GM13976 (cell line): ENCODE measurements at regions of chr3 and their contacts with region 1.

Region 1: GRCh38 chr3:196609343-196609775 is 30.1 kb upstream of the NRROS start:
- DNase-seq: peak; percentile 88
- CTCF ChIP-seq: peak; percentile 69

Region 2: GRCh38 chr3:196684548-196685407 is 75.4 kb after region 1 on chr3:
- in situ Hi-C with region 1: loop called (anchors 10 kb)
- DNase-seq: peak; percentile 84
- CTCF ChIP-seq: peak; percentile 73

Region 3: DNA sequence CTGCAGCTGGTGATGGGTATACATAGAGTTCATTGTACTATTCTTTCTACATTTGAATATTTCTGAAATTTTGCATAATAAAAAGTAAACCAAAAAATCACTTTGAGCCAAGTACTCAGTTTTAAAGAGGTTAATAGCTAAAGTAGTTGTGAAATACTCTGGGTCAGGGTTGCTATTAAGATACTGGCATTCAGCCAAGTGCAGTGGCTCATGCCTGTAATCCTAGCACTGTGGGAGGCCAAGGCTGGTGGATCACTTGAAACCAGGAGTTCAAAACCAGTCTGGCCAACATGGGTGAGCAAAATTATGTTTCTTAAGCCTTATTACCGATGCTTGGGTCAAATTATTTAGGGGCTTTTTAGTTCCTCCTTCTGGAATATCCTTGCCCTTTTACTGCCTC is 542.2 kb after region 1 on chr3:
- in situ Hi-C with region 1: no loop called
- DNase-seq: no peak
- CTCF ChIP-seq: no peak